Right cardiac atrium (tissue), 5 donors: ENCODE measurements at regions of chr1 and their contacts with region 1.

Region 1: GRCh38 chr1:25616095-25616986 is at the start of gene MAN1C1:
- DNase-seq: peak; percentile 92 to 97 (median 96)
- ATAC-seq: peak; percentile 95
- H3K4me3 ChIP-seq: peak within 1 kb of the TSS; percentile 98
- H3K27ac ChIP-seq: peak within 1 kb of the TSS; percentile 20
- H3K4me1 ChIP-seq: peaks cover 9% of the 10 kb centered on the region
- H3K27me3 ChIP-seq: no peaks in the 10 kb centered on the region
- total RNA-seq, gene MAN1C1: 10.6 to 15.7 (median 12.8) TPM

Region 2: DNA sequence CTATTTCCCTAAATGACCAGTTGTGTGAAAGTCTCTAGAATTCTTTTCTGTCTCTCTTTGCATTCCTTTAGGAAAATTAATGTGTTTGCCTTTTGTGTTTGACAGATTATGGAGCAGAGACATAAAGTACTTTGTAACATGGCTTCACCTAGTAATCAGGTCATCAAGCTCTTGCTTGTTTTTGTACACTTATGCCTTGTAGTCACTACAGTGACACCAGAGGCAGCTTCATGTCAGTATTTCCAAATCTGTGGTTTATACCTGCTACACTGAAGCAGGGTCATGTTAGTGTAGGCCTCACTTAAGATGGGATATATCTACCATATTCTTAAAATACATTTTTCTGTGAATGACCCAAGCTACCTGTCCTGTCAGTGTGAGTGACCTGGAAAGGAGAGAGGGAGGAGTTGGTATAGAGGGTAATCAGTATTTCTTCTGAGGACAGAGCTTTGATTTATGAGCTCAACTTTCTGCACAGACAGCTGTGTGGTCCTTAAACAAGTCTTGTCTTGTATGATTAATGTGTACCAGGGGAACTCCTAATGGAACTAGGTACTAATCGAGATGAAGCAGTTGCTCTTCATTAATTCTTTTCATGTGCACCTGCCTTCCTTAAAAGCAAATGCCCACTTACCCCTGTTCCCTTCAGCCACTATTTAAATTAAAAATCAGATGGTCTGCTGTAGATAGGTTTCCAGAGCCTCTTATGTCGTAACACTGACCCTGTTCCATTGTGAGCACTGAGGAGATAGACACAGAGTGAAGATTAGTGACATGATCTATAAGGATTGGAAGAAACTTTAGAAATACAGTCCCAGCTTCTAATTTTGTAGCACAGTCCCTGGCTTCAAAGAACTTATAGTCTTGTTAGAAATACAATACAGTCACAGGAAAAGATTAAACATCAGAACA is 139.9 kb before region 1 on chr1:
- intact Hi-C with region 1: no loop called
- DNase-seq: no peak
- ATAC-seq: no peak
- H3K4me3 ChIP-seq: no peak overlapping the region
- H3K27ac ChIP-seq: no peak overlapping the region
- H3K4me1 ChIP-seq: peaks cover 8% of the 10 kb centered on the region
- H3K27me3 ChIP-seq: no peaks in the 10 kb centered on the region

Region 3: GRCh38 chr1:25664357-25665199 is 48.2 kb after region 1 on chr1:
- intact Hi-C with region 1: no loop called
- DNase-seq: no peak
- ATAC-seq: peak in 1 of 2 donors; percentile 41
- H3K4me3 ChIP-seq: no peak overlapping the region
- H3K27ac ChIP-seq: no peak overlapping the region
- H3K4me1 ChIP-seq: no peaks in the 10 kb centered on the region
- H3K27me3 ChIP-seq: no peaks in the 10 kb centered on the region

Region 4: GRCh38 chr1:25688390-25689161 is 72.2 kb after region 1 on chr1:
- intact Hi-C with region 1: loop called in 2 of 4 experiments (anchors 10 kb)
- DNase-seq: peak in 2 of 3 donors; percentile 58 to 75
- ATAC-seq: peak; percentile 53
- H3K4me3 ChIP-seq: no peak overlapping the region
- H3K27ac ChIP-seq: peak overlapping the region; percentile 42
- H3K4me1 ChIP-seq: peaks cover 6% of the 10 kb centered on the region
- H3K27me3 ChIP-seq: no peaks in the 10 kb centered on the region

Region 5: DNA sequence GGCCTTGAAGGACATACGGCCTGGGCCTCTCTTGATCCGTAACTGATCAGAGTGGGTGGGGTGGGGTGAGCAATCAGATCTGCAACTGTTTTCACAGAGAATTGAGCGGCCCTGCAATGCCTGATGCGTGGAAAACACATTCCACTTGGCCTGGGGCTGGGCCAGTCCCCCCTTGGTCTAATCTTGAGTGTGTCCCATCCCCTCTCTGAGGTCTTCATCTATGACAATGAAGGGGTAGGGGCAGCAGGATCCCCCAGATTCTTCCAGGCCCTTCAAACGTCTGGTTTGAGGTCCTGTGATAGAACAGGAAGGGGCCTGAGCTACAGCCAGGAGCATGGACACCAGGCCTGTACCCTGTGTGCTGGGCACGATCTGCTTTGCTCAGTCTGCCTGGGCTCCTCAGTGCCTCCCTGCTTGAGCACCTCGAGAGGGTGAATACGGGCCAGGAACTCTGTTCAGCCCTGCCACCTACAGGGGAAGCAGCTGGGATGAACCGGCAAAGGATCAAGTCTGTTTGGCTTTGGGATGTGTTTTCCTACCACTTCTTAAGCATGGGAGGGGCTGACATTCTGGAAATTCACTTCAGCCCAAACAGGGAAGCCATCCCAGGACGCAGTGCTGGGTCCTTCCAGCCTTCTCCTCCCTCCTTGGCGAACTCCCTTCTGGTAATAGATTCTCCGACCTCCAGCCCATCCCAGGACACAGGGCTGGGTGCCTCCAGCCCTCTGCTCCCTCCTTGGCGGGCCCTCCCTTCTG is 127.7 kb after region 1 on chr1:
- intact Hi-C with region 1: loop called in 2 of 4 experiments (anchors 5 kb)
- DNase-seq: peak; percentile 71 to 86 (median 83)
- ATAC-seq: peak; percentile 84 to 87
- H3K4me3 ChIP-seq: no peak overlapping the region
- H3K27ac ChIP-seq: peak overlapping the region; percentile 99
- H3K4me1 ChIP-seq: peaks cover 14% of the 10 kb centered on the region
- H3K27me3 ChIP-seq: no peaks in the 10 kb centered on the region

Region 6: DNA sequence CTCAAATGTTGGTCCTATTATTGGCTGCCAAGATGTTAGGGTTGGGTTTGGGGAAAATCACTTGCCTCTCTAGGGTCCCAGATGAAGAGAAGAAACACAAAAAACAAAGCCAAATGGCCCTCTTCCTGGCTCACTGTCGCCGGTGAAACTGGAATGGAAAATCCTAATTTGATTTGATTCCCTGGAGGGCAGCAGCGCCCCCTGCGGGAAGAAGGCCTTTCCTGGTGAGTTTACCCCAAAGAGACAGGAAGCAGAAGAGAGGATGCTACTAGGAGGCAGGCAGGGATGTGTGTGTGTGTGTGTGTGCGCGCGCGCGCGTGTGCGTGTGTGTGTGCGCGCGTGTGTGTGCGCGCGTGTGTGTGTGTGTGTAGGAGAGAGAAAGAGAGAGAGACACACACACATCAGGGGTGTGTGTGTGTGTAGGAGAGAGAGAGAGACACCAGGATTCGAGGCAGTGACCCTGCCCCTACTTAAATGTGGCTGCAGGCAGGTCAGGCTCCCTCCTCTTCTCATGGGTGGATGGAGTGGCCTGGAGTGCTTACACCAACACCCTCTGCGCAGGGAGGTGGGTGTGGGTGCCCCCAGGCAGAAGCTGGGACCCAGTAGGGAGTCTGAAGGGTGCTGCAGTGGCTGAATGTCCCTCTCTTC is 180.6 kb after region 1 on chr1:
- intact Hi-C with region 1: loop called in 3 of 4 experiments (anchors 2 to 5 kb)
- DNase-seq: peak; percentile 85 to 96 (median 93)
- ATAC-seq: peak in 1 of 2 donors; percentile 32
- H3K4me3 ChIP-seq: no peak overlapping the region
- H3K27ac ChIP-seq: no peak overlapping the region
- H3K4me1 ChIP-seq: peaks cover 6% of the 10 kb centered on the region
- H3K27me3 ChIP-seq: no peaks in the 10 kb centered on the region